ENCODE measurements at regions of chr20 and their contacts with region 1.

Region 1: GRCh38 chr20:32789896-32790750 is 27.9 kb downstream of the DNMT3B start:
- DNase-seq: peak; percentile 60 to 85
- ATAC-seq: peak; percentile 85 to 99 (median 96)
- H3K4me3 ChIP-seq: no peak overlapping the region
- H3K4me3 Mint-ChIP-seq: no peak overlapping the region
- H3K27ac ChIP-seq: no peak overlapping the region
- H3K27ac Mint-ChIP-seq: no peak overlapping the region
- H3K4me1 ChIP-seq: peaks cover 6% of the 10 kb centered on the region
- H3K4me1 Mint-ChIP-seq: peaks cover 7 to 13% of the 10 kb centered on the region in 2 donors
- H3K27me3 ChIP-seq: no peaks in the 10 kb centered on the region
- H3K27me3 Mint-ChIP-seq: no peaks in the 10 kb centered on the region
- CTCF ChIP-seq: peak; percentile 94

Region 2: DNA sequence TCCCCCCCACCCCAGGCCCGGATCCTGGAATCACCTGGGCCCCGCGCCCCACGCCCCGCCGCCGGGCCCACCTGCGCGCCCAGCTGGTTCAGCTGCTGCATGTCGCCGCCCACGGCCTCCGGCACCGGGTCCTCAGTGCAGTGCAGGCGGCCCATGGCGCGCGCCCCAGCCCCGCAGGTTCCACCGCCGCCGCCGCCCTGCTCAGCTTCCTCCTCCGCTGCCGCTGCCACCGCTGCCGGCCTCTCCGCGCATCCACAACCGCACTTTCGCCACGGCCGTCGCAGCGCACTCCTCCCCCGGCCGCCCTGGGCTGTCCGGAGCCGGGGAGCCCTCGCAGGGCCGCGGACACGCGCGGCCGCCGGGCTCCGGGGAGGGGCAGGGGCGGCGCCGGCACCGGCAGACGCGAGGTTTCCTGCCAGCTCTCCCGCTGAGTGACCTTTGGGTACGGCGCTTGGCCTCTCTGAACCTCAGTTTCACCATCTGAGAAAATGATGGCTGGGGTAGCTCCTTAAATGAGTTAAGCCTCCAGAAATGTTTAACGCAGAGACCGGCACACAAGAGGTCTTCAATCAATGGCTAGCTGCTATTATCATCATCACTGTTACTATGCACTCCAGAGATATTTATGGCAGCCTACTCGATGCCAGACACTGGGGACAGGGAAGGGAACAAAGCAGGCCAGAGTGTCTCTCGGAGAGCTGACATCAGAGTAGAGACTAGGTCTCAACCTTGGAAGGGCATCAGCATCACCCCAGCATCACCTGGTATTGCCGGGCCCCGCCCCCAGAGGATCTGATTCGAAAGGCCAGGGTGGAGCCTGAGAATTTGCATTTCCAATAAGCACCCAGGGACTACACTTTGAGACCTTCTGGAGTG is 46.6 kb before region 1 on chr20 and contains the start of gene COMMD7:
- intact Hi-C with region 1: no loop called
- DNase-seq: peak; percentile 54 to 74
- ATAC-seq: peak; percentile 66 to 86 (median 84)
- H3K4me3 ChIP-seq: peak within 1 kb of the TSS; percentile 86
- H3K4me3 Mint-ChIP-seq: peak within 1 kb of the TSS; percentile 98
- H3K27ac ChIP-seq: peak within 1 kb of the TSS; percentile 90
- H3K27ac Mint-ChIP-seq: peak within 1 kb of the TSS; percentile 94 to 99
- H3K4me1 ChIP-seq: peaks cover 26% of the 10 kb centered on the region
- H3K4me1 Mint-ChIP-seq: peaks cover 29 to 37% of the 10 kb centered on the region in 2 donors
- H3K27me3 ChIP-seq: no peaks in the 10 kb centered on the region
- H3K27me3 Mint-ChIP-seq: no peaks in the 10 kb centered on the region
- CTCF ChIP-seq: no peak
- total RNA-seq, gene COMMD7: 56.7 to 72.1 (median 68.1) TPM

Region 3: GRCh38 chr20:32945710-32946221 is 155.6 kb after region 1 on chr20:
- intact Hi-C with region 1: loop called (anchors 2 kb)
- DNase-seq: peak in 1 of 2 donors; percentile 71
- ATAC-seq: peak in 1 of 3 donors; percentile 48
- H3K4me3 ChIP-seq: no peak overlapping the region
- H3K4me3 Mint-ChIP-seq: no peak overlapping the region
- H3K27ac ChIP-seq: no peak overlapping the region
- H3K27ac Mint-ChIP-seq: no peak overlapping the region
- H3K4me1 ChIP-seq: no peaks in the 10 kb centered on the region
- H3K4me1 Mint-ChIP-seq: no peaks in the 10 kb centered on the region
- H3K27me3 ChIP-seq: no peaks in the 10 kb centered on the region
- H3K27me3 Mint-ChIP-seq: peaks cover 6 to 19% of the 10 kb centered on the region in 2 donors
- CTCF ChIP-seq: no peak

Region 4: GRCh38 chr20:33097001-33097400 is 306.9 kb after region 1 on chr20:
- intact Hi-C with region 1: loop called (anchors 2 kb)
- DNase-seq: no peak
- ATAC-seq: no peak
- H3K4me3 ChIP-seq: no peak overlapping the region
- H3K4me3 Mint-ChIP-seq: no peak overlapping the region
- H3K27ac ChIP-seq: no peak overlapping the region
- H3K27ac Mint-ChIP-seq: no peak overlapping the region
- H3K4me1 ChIP-seq: no peaks in the 10 kb centered on the region
- H3K4me1 Mint-ChIP-seq: no peaks in the 10 kb centered on the region
- H3K27me3 ChIP-seq: no peaks in the 10 kb centered on the region
- H3K27me3 Mint-ChIP-seq: peaks cover 0 to 7% of the 10 kb centered on the region in 2 donors
- CTCF ChIP-seq: no peak

Region 5: GRCh38 chr20:33148040-33148439 is 357.9 kb after region 1 on chr20:
- intact Hi-C with region 1: no loop called
- DNase-seq: no peak
- ATAC-seq: no peak
- H3K4me3 ChIP-seq: no peak overlapping the region
- H3K4me3 Mint-ChIP-seq: no peak overlapping the region
- H3K27ac ChIP-seq: no peak overlapping the region
- H3K27ac Mint-ChIP-seq: no peak overlapping the region
- H3K4me1 ChIP-seq: no peaks in the 10 kb centered on the region
- H3K4me1 Mint-ChIP-seq: no peaks in the 10 kb centered on the region
- H3K27me3 ChIP-seq: peaks cover 3% of the 10 kb centered on the region
- H3K27me3 Mint-ChIP-seq: peaks cover 16 to 51% of the 10 kb centered on the region in 2 donors
- CTCF ChIP-seq: no peak

Region 6: DNA sequence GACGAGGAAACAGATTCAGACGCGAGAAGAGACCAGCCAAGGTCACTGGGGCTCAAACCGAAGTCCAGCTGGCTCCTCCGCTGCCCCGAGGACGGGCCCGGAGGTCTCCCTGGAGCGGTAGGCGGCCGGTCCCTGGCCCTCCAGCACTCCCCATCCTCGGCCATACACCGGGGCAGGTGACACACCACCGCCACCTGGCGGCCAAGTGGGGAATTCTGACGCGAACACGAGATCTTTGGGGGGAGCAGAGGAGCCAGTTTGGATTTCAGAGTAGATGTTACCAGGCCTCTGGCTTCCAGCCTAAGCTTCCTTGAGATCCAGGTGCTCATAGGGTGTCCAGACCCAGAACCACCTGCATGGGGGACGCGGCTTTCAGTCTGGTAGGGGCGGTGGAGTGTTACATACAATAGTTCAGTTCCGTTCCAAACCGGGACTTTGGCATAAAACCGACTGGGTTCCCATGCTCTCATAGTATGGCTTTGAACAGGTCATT is 509.0 kb after region 1 on chr20:
- intact Hi-C with region 1: loop called (anchors 5 kb)
- DNase-seq: peak; percentile 72 to 84
- ATAC-seq: peak; percentile 78 to 96 (median 85)
- H3K4me3 ChIP-seq: no peak overlapping the region
- H3K4me3 Mint-ChIP-seq: no peak overlapping the region
- H3K27ac ChIP-seq: no peak overlapping the region
- H3K27ac Mint-ChIP-seq: no peak overlapping the region
- H3K4me1 ChIP-seq: peaks cover 6% of the 10 kb centered on the region
- H3K4me1 Mint-ChIP-seq: peaks cover 0 to 5% of the 10 kb centered on the region in 2 donors
- H3K27me3 ChIP-seq: no peaks in the 10 kb centered on the region
- H3K27me3 Mint-ChIP-seq: peaks cover 14 to 16% of the 10 kb centered on the region in 2 donors
- CTCF ChIP-seq: peak; percentile 96